HEK293 (cell line): ENCODE measurements at regions of chr18 and their contacts with region 1.

Region 1: DNA sequence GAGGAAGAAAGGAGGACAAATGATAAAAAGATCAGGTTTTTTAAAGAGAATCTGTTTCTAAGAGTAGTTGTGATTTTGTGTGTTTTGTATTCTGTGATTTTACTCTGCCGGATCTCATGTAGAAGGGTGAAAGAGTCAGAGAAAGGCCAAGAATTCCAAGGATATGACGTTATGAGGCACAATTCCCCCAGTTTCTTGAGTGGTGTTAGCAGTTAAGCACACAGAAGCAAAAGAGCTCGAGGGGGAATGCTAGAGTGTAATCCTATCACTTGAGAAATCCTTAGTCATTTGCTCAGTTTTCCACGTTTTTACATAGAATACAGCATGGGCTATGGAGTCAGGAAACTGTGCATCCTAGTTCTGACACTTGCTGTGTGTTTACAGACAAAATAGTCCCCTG is 34.8 kb downstream of the METTL4 start:
- H3K4me3 ChIP-seq: no peak overlapping the region
- H3K27ac ChIP-seq: no peak overlapping the region
- H3K4me1 ChIP-seq: peaks cover 24% of the 10 kb centered on the region
- CTCF ChIP-seq: no peak

Region 2: GRCh38 chr18:2173464-2173863 is 363.0 kb before region 1 on chr18:
- CTCF ChIA-PET with region 1: no interaction called
- POLR2A ChIA-PET with region 1: no interaction called
- H3K4me3 ChIP-seq: no peak overlapping the region
- H3K27ac ChIP-seq: no peak overlapping the region
- H3K4me1 ChIP-seq: no peaks in the 10 kb centered on the region
- CTCF ChIP-seq: no peak

Region 3: GRCh38 chr18:2559249-2559648 is 22.8 kb after region 1 on chr18:
- CTCF ChIA-PET with region 1: interaction called, 13 read pairs
- POLR2A ChIA-PET with region 1: no interaction called
- H3K4me3 ChIP-seq: no peak overlapping the region
- H3K27ac ChIP-seq: no peak overlapping the region
- H3K4me1 ChIP-seq: no peaks in the 10 kb centered on the region; the same call in 1 of the 2 replicates
- CTCF ChIP-seq: no peak